Aorta (tissue), 5 donors: ENCODE measurements at regions of chr20 and their contacts with region 1.

Region 1: GRCh38 chr20:37451616-37452015 is 69.4 kb upstream of the NNAT start:
- DNase-seq: no peak
- ATAC-seq: no peak
- H3K4me3 ChIP-seq: no peak overlapping the region
- H3K27ac ChIP-seq: no peak overlapping the region
- H3K4me1 ChIP-seq: no peaks in the 10 kb centered on the region
- H3K27me3 ChIP-seq: no peaks in the 10 kb centered on the region

Region 2: DNA sequence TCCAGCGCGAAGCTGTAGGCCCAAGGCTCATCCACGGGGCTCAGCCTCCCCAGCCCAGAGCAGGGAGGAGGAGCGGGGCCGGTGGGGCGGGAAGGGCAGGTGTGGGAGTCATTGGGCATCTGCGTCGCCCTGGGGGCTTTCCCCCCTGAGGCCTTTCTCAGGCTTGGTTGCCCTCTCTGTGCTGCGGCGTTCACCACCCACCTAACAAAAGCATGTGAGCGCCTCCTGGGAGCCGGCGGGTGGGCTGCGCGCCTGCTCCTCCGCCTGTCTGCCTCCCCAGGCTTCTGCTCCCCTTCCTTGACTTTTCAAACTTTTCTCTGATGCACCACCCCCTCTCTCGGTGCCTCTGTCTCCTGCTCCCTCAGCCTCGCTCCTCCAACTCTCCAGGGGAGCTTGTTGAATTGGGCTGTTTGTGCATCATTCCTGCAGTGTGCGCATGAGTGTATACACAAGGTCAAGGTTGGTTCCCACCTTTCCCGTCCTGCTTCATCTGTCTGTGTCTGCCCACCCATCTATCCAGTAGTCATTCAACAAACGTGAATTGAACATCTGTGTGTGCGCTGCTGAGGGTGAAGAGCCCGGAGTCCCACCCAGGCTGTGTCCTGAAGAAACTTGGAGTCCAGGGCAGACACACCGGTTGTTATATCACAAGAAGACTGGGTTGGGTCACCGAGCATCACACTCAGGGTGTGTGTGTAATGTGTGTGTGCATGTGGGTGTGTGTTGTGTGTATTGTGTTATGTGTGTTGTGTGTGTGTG is 13.0 kb before region 1 on chr20:
- intact Hi-C with region 1: loop called in 1 of 2 experiments (anchors 1 kb)
- DNase-seq: no peak
- ATAC-seq: no peak
- H3K4me3 ChIP-seq: no peak overlapping the region
- H3K27ac ChIP-seq: no peak overlapping the region
- H3K4me1 ChIP-seq: no peaks in the 10 kb centered on the region
- H3K27me3 ChIP-seq: no peaks in the 10 kb centered on the region